ENCODE measurements at regions of chr4 and their contacts with region 1.

Region 1: GRCh38 chr4:81405894-81406401 is 65.8 kb downstream of the RASGEF1B start:
- DNase-seq: peak; percentile 36
- ATAC-seq: peak; percentile 78
- H3K4me3 Mint-ChIP-seq: no peak overlapping the region
- H3K27ac Mint-ChIP-seq: no peak overlapping the region
- H3K4me1 Mint-ChIP-seq: peaks cover 3% of the 10 kb centered on the region
- H3K27me3 Mint-ChIP-seq: no peaks in the 10 kb centered on the region

Region 2: GRCh38 chr4:81454499-81454898 is 48.6 kb after region 1 on chr4:
- CTCF ChIA-PET with region 1: no interaction called
- POLR2A ChIA-PET with region 1: no interaction called
- intact Hi-C with region 1: loop called in 1 of 2 experiments (anchors 2 kb)
- DNase-seq: peak; percentile 74
- ATAC-seq: peak; percentile 96
- H3K4me3 Mint-ChIP-seq: no peak overlapping the region
- H3K27ac Mint-ChIP-seq: peak overlapping the region; percentile 56
- H3K4me1 Mint-ChIP-seq: peaks cover 18% of the 10 kb centered on the region
- H3K27me3 Mint-ChIP-seq: no peaks in the 10 kb centered on the region

Region 3: DNA sequence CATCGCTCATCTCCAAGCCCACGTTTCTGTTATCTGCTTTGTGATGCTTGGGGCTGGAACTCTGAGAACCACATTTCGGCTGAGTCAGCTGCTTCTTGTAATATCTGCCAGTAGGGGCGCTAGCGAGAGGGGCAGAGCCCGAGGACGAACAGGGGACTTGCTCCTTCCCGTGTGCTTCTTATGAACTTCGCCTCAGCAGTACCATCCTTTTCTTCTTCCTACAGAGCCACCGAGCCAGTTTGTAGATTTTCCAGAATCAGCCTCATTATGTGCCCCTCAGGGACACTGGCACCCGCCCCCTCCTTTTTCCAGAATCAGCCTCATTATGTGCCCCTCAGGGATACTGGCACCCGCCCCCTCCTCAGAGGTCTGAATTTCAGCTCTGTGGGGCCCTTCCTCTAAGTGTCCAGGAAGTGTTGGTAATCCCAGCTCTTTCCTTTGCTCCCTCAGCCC is 507.5 kb after region 1 on chr4:
- CTCF ChIA-PET with region 1: interaction called, 3 read pairs
- POLR2A ChIA-PET with region 1: no interaction called
- intact Hi-C with region 1: loop called (anchors 5 kb)
- DNase-seq: peak; percentile 77
- ATAC-seq: peak; percentile 81
- H3K4me3 Mint-ChIP-seq: no peak overlapping the region
- H3K27ac Mint-ChIP-seq: no peak overlapping the region
- H3K4me1 Mint-ChIP-seq: peaks cover 7% of the 10 kb centered on the region
- H3K27me3 Mint-ChIP-seq: peaks cover 7% of the 10 kb centered on the region

Region 4: GRCh38 chr4:82201805-82202641 is 796.1 kb after region 1 on chr4:
- CTCF ChIA-PET with region 1: interaction called, 3 read pairs
- POLR2A ChIA-PET with region 1: no interaction called
- intact Hi-C with region 1: loop called (anchors 1 kb)
- DNase-seq: peak; percentile 72
- ATAC-seq: peak; percentile 57
- H3K4me3 Mint-ChIP-seq: no peak overlapping the region
- H3K27ac Mint-ChIP-seq: no peak overlapping the region
- H3K4me1 Mint-ChIP-seq: peaks cover 3% of the 10 kb centered on the region
- H3K27me3 Mint-ChIP-seq: peaks cover 2% of the 10 kb centered on the region

Region 5: GRCh38 chr4:82284858-82285805 is 879.2 kb after region 1 on chr4:
- CTCF ChIA-PET with region 1: no interaction called
- POLR2A ChIA-PET with region 1: no interaction called
- intact Hi-C with region 1: loop called in 1 of 2 experiments (anchors 5 kb)
- DNase-seq: peak; percentile 100
- ATAC-seq: peak; percentile 99
- H3K4me3 Mint-ChIP-seq: peak overlapping the region; percentile 68
- H3K27ac Mint-ChIP-seq: peak overlapping the region; percentile 62
- H3K4me1 Mint-ChIP-seq: peaks cover 13% of the 10 kb centered on the region
- H3K27me3 Mint-ChIP-seq: no peaks in the 10 kb centered on the region

Region 6: DNA sequence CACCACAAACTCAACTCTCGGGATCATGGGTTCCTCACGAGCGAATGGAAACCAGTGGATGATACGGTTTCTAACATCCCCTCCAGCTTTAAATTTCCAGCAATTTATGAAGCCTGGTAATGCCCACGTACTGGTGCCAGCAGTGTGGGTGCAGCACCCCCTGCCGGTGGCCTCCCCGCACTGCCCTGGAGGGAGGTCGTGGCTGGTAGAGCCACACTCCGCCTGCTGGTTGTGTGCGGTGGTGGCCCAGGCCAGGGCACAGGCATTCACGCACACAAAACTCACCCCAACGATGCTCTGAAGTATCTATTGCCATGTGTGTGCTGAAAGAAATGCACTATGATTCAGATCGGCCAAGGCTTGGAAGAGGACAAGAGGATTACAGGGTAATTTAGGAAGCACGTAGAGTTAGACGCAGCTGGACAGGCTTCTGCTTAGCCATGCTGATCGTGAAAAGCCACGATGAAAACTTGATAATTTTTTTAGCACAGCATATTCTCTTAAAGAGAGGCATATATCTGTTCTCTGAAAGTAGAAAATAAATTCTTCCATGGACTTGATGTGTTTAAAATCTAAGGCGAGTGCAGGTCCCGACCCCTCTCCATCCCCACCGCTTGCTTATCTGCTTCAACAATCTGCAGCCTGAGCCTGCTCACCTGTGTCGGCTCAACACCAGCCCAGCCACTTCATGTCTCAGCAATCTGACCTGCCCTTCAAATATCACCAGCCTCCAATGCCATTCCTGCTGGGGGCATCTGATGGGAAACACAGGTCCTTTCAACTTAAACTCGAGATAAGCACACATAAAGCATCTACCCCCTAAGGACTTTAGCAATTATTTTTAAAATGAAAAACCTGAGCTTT is 1333.6 kb after region 1 on chr4:
- CTCF ChIA-PET with region 1: no interaction called
- POLR2A ChIA-PET with region 1: no interaction called
- intact Hi-C with region 1: loop called in 1 of 2 experiments (anchors 5 kb)
- DNase-seq: peak; percentile 92
- ATAC-seq: peak; percentile 100
- H3K4me3 Mint-ChIP-seq: no peak overlapping the region
- H3K27ac Mint-ChIP-seq: no peak overlapping the region
- H3K4me1 Mint-ChIP-seq: no peaks in the 10 kb centered on the region
- H3K27me3 Mint-ChIP-seq: peaks cover 4% of the 10 kb centered on the region